ENCODE measurements at regions of chr2 and their contacts with region 1.

Region 1: DNA sequence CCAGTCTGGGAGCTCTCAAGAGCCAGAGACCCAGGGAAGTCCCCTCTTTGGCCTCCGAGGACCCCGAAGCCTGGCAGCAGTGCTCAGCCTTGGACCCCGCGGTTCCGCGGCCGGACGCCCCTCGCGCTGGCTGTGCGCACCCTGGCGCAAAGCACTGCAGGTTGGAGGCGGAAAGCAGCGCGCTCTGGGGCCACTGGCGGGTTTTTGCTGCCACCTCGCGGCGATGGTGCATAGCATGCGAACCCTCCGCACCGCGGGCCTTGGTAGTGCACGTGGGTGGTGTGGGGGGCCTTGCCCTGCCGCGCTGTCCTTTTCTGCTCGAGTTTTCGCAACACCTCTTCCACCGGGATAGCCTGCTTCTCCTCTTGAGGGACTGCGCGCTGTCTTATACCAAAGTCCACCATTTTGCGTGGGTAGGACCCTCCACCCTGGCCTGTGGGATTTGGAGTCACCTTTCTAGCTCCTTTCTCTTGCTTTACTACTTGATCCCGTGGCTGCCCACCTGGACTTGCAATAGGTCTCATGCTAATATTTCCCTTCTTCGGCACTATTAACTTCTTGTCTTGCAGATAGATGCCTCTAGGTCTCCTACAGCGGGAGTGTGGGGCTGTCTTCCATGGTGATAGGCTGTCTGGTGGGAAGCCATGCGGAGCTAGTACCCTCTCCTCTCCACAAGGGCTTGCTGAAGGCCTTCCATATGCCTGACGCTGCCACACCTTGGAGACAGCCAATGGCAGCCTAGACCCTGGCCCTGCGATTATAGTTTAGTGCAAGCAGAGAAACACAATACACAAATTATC is 14.3 kb downstream of the SIX3 start:
- DNase-seq: no peak
- H3K4me3 ChIP-seq: peak overlapping the region; percentile 21 to 43 (median 30)
- H3K27ac ChIP-seq: no peak overlapping the region
- H3K4me1 ChIP-seq: peaks cover 29 to 45% (median 37%) of the 10 kb centered on the region in 4 donors
- H3K27me3 ChIP-seq: peaks cover 0 to 85% (median 44%) of the 10 kb centered on the region in 4 donors
- CTCF ChIP-seq: peak; percentile 73 to 90 (median 89)
- EP300 ChIP-seq: no peak
- POLR2A ChIP-seq: no peak

Region 2: DNA sequence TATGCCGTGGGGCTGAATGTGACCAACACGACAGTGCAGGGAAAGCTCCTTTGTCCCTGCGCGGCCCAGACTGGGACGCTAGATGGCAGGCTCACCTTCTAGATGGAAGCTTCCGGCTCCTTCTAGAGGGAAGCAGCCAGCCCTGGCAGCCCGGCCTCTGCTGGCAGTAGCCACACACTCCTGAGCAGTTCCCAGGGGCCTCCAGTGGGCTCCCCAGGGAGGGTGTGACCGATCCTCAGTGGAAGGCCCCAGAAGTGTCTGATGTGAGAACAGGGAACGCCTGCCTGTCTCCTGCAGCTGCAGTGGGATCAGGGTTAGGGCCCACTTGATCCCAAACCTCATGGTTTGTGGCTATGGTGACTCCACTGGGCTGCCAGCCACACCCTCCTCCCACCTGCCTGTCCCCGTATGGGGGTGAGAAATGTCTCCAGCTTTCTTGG is 911.5 kb before region 1 on chr2:
- intact Hi-C with region 1: loop called (anchors 5 kb)
- DNase-seq: no peak
- H3K4me3 ChIP-seq: no peak overlapping the region
- H3K27ac ChIP-seq: no peak overlapping the region
- H3K4me1 ChIP-seq: peaks cover 0 to 7% (median 6%) of the 10 kb centered on the region in 4 donors
- H3K27me3 ChIP-seq: peaks cover 0 to 4% (median 0%) of the 10 kb centered on the region in 4 donors
- CTCF ChIP-seq: peak; percentile 76 to 92 (median 77)
- EP300 ChIP-seq: no peak
- POLR2A ChIP-seq: no peak

Region 3: GRCh38 chr2:44392338-44392943 is 563.4 kb before region 1 on chr2:
- intact Hi-C with region 1: loop called (anchors 10 kb)
- DNase-seq: no peak
- H3K4me3 ChIP-seq: no peak overlapping the region
- H3K27ac ChIP-seq: no peak overlapping the region
- H3K4me1 ChIP-seq: no peaks in the 10 kb centered on the region
- H3K27me3 ChIP-seq: no peaks in the 10 kb centered on the region
- CTCF ChIP-seq: peak; percentile 25 to 60 (median 40)
- EP300 ChIP-seq: no peak
- POLR2A ChIP-seq: no peak

Region 4: GRCh38 chr2:44479122-44479887 is 476.5 kb before region 1 on chr2:
- intact Hi-C with region 1: loop called (anchors 2 kb)
- DNase-seq: no peak
- H3K4me3 ChIP-seq: no peak overlapping the region
- H3K27ac ChIP-seq: no peak overlapping the region
- H3K4me1 ChIP-seq: no peaks in the 10 kb centered on the region
- H3K27me3 ChIP-seq: no peaks in the 10 kb centered on the region
- CTCF ChIP-seq: peak; percentile 95 to 98 (median 96)
- EP300 ChIP-seq: no peak
- POLR2A ChIP-seq: no peak

Region 5: DNA sequence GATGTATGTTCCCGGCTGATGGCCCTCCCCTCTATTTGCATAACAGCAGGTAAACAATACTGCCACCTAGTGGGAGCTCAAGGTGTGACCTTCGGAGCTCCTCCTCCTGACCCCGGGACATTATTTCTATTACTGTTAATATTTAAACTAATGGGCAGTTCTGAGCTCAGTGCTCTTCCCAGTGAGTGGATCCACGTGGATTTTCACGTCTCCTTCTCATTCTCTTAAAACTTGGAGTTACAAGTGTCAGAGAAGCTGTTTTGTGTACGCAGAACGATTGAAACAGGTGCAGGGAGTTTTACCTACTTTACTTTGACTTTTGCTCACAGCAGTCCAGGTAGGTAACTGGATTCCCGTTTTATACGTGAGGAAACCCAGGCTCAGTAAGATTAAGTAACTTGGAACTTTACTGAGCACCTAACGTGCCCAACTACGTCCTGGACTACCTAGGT is 823.0 kb after region 1 on chr2:
- intact Hi-C with region 1: no loop called
- DNase-seq: no peak
- H3K4me3 ChIP-seq: no peak overlapping the region
- H3K27ac ChIP-seq: no peak overlapping the region
- H3K4me1 ChIP-seq: peaks cover 6 to 71% (median 49%) of the 10 kb centered on the region in 4 donors
- H3K27me3 ChIP-seq: no peaks in the 10 kb centered on the region
- CTCF ChIP-seq: peak; percentile 77 to 82 (median 79)
- EP300 ChIP-seq: no peak
- POLR2A ChIP-seq: no peak

Measured in esophagus muscularis mucosa (tissue), 4 donors.